Body of pancreas (tissue), 4 donors: ENCODE measurements at regions of chr3 and their contacts with region 1.

Region 1: DNA sequence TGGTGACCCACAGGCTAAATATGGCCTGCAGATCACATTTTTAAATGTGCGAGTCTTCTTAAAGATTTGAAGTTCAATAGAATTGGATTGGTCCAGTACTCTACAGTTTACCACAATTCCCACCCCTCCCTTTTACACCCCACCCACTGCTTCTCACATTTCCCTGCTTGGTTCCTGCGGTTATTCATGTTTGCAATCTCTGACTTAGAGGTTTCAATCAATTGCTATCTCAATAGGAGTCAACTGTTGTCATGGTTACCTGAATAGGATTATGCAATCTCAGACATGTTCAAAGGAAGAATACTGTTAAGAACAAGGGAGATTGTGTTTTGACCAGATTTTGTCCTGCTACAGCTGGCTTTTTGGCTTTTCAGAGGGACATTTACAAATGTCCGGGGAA is 4.9 kb upstream of the C3orf49 start:
- DNase-seq: no peak
- ATAC-seq: no peak
- H3K4me3 ChIP-seq: no peak overlapping the region
- H3K27ac ChIP-seq: no peak overlapping the region
- H3K4me1 ChIP-seq: peaks cover 4% of the 10 kb centered on the region
- H3K27me3 ChIP-seq: no peaks in the 10 kb centered on the region
- CTCF ChIP-seq: no peak
- POLR2A ChIP-seq: no peak

Region 2: GRCh38 chr3:63349583-63350521 is 464.4 kb before region 1 on chr3:
- intact Hi-C with region 1: loop called (anchors 5 kb)
- DNase-seq: peak; percentile 64 to 73 (median 70)
- ATAC-seq: peak; percentile 67
- H3K4me3 ChIP-seq: no peak overlapping the region
- H3K27ac ChIP-seq: no peak overlapping the region
- H3K4me1 ChIP-seq: no peaks in the 10 kb centered on the region
- H3K27me3 ChIP-seq: no peaks in the 10 kb centered on the region
- CTCF ChIP-seq: peak; percentile 46 to 78 (median 74)
- POLR2A ChIP-seq: no peak